ENCODE measurements at regions of chr7 and their contacts with region 1.

Region 1: DNA sequence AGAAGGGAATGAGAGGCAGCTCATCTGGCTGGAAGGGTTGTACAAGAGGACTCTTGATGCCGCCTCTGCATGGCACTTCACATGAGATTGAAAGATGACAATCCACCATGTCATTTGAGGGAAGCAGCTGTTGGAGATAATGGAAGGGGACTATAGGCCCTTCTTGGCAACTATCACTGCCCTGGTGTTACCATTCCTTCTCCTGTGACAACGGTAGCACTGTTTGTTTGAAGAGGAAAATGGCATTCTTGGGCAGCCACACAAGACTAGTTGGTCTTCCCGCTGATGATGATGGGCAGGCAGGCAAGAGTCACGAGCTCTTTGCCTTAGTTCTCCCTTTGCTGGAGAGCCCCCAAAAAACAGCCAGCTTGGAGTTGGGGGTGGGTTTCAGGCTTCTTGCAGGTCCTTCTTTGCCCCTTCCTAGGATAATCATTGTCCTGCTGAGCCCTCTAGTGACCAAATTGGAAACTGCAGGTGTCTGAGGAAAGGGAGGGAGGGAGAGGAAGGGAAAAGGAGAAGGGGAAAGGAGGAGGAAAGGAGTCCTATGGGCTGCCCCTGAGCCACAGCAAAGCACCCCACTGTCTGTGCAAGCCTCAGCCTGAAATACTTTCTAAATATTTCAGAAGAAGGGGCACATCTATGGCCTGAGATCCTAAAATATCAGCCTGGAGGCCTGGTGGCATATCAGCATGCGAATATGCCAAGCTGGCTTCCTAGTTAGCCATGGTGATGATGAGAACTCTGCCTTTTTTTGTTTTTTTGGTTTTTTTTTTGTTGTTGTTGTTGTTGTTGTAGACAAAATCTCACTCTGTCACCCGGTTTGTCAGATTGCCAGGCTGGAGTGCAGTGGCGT is 165.6 kb upstream of the KMT2E start:
- DNase-seq: peak; percentile 55 to 73
- H3K4me3 ChIP-seq: no peak overlapping the region
- H3K4me3 Mint-ChIP-seq: no peak overlapping the region
- H3K27ac Mint-ChIP-seq: no peak overlapping the region
- H3K4me1 ChIP-seq: no peaks in the 10 kb centered on the region
- H3K4me1 Mint-ChIP-seq: no peaks in the 10 kb centered on the region
- H3K27me3 ChIP-seq: no peaks in the 10 kb centered on the region
- H3K27me3 Mint-ChIP-seq: peaks cover 17% of the 10 kb centered on the region
- CTCF ChIP-seq: peak; percentile 83 to 93

Region 2: GRCh38 chr7:104231054-104232046 is 617.0 kb before region 1 on chr7:
- CTCF ChIA-PET with region 1: no interaction called
- POLR2A ChIA-PET with region 1: no interaction called
- intact Hi-C with region 1: loop called (anchors 1 kb)
- DNase-seq: peak; percentile 61
- H3K4me3 ChIP-seq: no peak overlapping the region
- H3K4me3 Mint-ChIP-seq: no peak overlapping the region
- H3K27ac Mint-ChIP-seq: no peak overlapping the region
- H3K4me1 ChIP-seq: peaks cover 15% of the 10 kb centered on the region
- H3K4me1 Mint-ChIP-seq: peaks cover 16% of the 10 kb centered on the region
- H3K27me3 ChIP-seq: no peaks in the 10 kb centered on the region
- H3K27me3 Mint-ChIP-seq: no peaks in the 10 kb centered on the region
- CTCF ChIP-seq: peak; percentile 84 to 91

Region 3: DNA sequence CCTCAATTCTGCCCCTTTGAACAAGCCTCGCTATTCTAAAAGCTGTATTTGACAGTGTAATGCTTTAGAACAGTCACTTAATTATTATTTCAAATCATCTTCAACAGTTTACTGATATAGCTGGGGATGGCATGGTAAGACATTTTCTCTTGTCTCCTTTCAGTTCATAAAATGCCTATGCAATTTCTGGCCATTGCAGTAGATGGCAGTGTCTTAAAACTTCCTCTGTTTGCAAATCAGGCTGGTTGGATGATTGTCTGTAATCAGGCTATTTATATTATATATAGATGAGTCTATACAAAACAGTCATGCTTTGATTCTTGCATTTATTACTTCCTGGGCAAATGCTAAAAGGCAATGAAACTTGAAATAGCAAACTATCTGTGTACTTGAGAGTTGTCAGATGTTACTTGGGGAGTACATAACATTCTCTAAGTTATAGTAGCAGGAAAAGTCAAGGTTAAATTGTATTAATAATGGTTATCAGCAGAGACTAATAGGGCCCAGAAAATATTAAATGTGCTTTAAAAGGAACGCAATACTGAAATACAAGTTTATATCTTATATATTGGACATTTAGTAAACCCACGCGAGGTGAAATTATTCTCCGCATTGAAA is 575.5 kb before region 1 on chr7:
- CTCF ChIA-PET with region 1: no interaction called
- POLR2A ChIA-PET with region 1: no interaction called
- intact Hi-C with region 1: loop called (anchors 1 kb)
- DNase-seq: peak in 1 of 2 experiments; percentile 24
- H3K4me3 ChIP-seq: no peak overlapping the region
- H3K4me3 Mint-ChIP-seq: no peak overlapping the region
- H3K27ac Mint-ChIP-seq: no peak overlapping the region
- H3K4me1 ChIP-seq: no peaks in the 10 kb centered on the region
- H3K4me1 Mint-ChIP-seq: no peaks in the 10 kb centered on the region
- H3K27me3 ChIP-seq: no peaks in the 10 kb centered on the region
- H3K27me3 Mint-ChIP-seq: peaks cover 15% of the 10 kb centered on the region
- CTCF ChIP-seq: peak; percentile 58 to 62

Region 4: GRCh38 chr7:104341546-104341945 is 506.8 kb before region 1 on chr7:
- CTCF ChIA-PET with region 1: no interaction called
- POLR2A ChIA-PET with region 1: no interaction called
- intact Hi-C with region 1: loop called (anchors 1 kb)
- DNase-seq: peak; percentile 39 to 48
- H3K4me3 ChIP-seq: no peak overlapping the region
- H3K4me3 Mint-ChIP-seq: no peak overlapping the region
- H3K27ac Mint-ChIP-seq: no peak overlapping the region
- H3K4me1 ChIP-seq: no peaks in the 10 kb centered on the region
- H3K4me1 Mint-ChIP-seq: no peaks in the 10 kb centered on the region
- H3K27me3 ChIP-seq: no peaks in the 10 kb centered on the region
- H3K27me3 Mint-ChIP-seq: peaks cover 5% of the 10 kb centered on the region
- CTCF ChIP-seq: peak; percentile 28 to 61

Region 5: GRCh38 chr7:104643587-104644217 is 204.7 kb before region 1 on chr7:
- CTCF ChIA-PET with region 1: interaction called, 5 read pairs
- POLR2A ChIA-PET with region 1: no interaction called
- intact Hi-C with region 1: loop called (anchors 1 kb)
- DNase-seq: peak in 1 of 2 experiments; percentile 29
- H3K4me3 ChIP-seq: no peak overlapping the region
- H3K4me3 Mint-ChIP-seq: no peak overlapping the region
- H3K27ac Mint-ChIP-seq: no peak overlapping the region
- H3K4me1 ChIP-seq: no peaks in the 10 kb centered on the region
- H3K4me1 Mint-ChIP-seq: no peaks in the 10 kb centered on the region
- H3K27me3 ChIP-seq: no peaks in the 10 kb centered on the region
- H3K27me3 Mint-ChIP-seq: peaks cover 16% of the 10 kb centered on the region
- CTCF ChIP-seq: peak; percentile 72 to 74

Region 6: GRCh38 chr7:104772405-104773345 is 75.7 kb before region 1 on chr7:
- CTCF ChIA-PET with region 1: no interaction called
- POLR2A ChIA-PET with region 1: no interaction called
- intact Hi-C with region 1: loop called (anchors 5 kb)
- DNase-seq: no peak
- H3K4me3 ChIP-seq: no peak overlapping the region
- H3K4me3 Mint-ChIP-seq: no peak overlapping the region
- H3K27ac Mint-ChIP-seq: no peak overlapping the region
- H3K4me1 ChIP-seq: no peaks in the 10 kb centered on the region
- H3K4me1 Mint-ChIP-seq: peaks cover 6% of the 10 kb centered on the region
- H3K27me3 ChIP-seq: no peaks in the 10 kb centered on the region
- H3K27me3 Mint-ChIP-seq: peaks cover 4% of the 10 kb centered on the region
- CTCF ChIP-seq: no peak

Region 7: DNA sequence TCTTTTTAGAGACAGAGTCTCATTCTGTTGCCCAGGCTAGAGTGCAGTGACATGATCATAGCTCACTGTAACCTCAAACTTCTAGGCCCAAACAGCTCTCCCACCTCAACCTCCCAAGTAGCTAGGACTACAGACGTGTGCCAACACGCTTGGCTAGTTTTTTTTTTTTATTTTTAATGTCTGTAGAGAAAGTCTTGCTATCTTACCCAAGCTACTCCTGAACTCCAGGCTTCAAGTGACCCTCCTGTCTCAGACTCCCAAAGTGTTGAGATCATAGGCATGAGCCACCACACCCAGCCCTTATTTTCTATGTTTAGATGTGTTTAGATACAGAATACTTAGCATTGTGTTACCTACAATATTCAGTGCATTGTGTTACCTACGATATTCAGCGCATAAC is 212.1 kb after region 1 on chr7:
- CTCF ChIA-PET with region 1: no interaction called
- POLR2A ChIA-PET with region 1: no interaction called
- intact Hi-C with region 1: no loop called
- DNase-seq: no peak
- H3K4me3 ChIP-seq: no peak overlapping the region
- H3K4me3 Mint-ChIP-seq: no peak overlapping the region
- H3K27ac Mint-ChIP-seq: no peak overlapping the region
- H3K4me1 ChIP-seq: no peaks in the 10 kb centered on the region
- H3K4me1 Mint-ChIP-seq: peaks cover 6% of the 10 kb centered on the region
- H3K27me3 ChIP-seq: no peaks in the 10 kb centered on the region
- H3K27me3 Mint-ChIP-seq: no peaks in the 10 kb centered on the region
- CTCF ChIP-seq: no peak

Measured in Caco-2 (cell line).